A673 (cell line): ENCODE measurements at regions of chr10 and their contacts with region 1.

Region 1: DNA sequence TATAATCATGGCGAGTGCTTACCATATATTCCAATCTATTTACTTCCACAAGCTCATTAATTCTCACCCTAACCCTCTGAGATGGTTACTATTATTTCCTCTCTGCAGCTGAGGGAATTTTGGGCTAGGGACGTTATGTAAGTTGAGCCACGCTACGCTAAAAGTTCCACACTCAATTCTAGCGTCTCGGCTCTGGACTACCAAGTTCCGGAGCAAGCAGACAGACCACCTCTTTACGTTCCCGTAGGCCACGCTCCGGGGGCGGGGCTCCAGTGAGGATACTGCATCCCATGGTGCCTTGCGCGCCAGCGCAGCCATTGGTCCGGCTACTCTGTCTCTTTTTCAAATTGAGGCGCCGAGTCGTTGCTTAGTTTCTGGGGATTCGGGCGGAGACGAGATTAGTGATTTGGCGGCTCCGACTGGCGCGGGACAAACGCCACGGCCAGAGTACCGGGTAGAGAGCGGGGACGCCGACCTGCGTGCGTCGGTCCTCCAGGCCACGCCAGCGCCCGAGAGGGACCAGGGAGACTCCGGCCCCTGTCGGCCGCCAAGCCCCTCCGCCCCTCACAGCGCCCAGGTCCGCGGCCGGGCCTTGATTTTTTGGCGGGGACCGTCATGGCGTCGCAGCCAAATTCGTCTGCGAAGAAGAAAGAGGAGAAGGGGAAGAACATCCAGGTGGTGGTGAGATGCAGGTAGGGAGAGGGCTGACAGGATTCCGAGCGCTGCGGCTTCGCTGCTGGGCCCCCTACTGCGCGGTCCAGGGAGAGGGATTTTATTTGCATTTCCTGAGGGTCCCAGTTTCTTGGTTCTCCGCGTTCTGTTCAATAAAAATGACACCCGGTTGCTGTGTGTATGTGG is at the start of gene KIF11:
- DNase-seq: peak; percentile 99
- H3K4me3 ChIP-seq: peak within 1 kb of the TSS; percentile 81
- H3K27ac ChIP-seq: peak within 1 kb of the TSS; percentile 96
- H3K4me1 ChIP-seq: peaks cover 20% of the 10 kb centered on the region
- H3K27me3 ChIP-seq: no peaks in the 10 kb centered on the region
- CTCF ChIP-seq: no peak
- total RNA-seq, gene KIF11: 91.4 and 92.0 TPM in 2 replicates

Region 2: GRCh38 chr10:92604841-92605240 is 11.9 kb after region 1 on chr10:
- CTCF ChIA-PET with region 1: no interaction called
- POLR2A ChIA-PET with region 1: interaction called, 16 read pairs
- intact Hi-C with region 1: no loop called
- DNase-seq: no peak
- H3K4me3 ChIP-seq: no peak overlapping the region
- H3K27ac ChIP-seq: no peak overlapping the region
- H3K4me1 ChIP-seq: peaks cover 4% of the 10 kb centered on the region
- H3K27me3 ChIP-seq: no peaks in the 10 kb centered on the region
- CTCF ChIP-seq: no peak

Region 3: GRCh38 chr10:92848441-92849233 is 255.6 kb after region 1 on chr10 and contains the start of gene EXOC6:
- CTCF ChIA-PET with region 1: no interaction called
- POLR2A ChIA-PET with region 1: no interaction called
- intact Hi-C with region 1: loop called (anchors 10 kb)
- DNase-seq: peak; percentile 93
- H3K4me3 ChIP-seq: peak within 1 kb of the TSS; percentile 84
- H3K27ac ChIP-seq: peak within 1 kb of the TSS; percentile 93
- H3K4me1 ChIP-seq: peaks cover 8% of the 10 kb centered on the region
- H3K27me3 ChIP-seq: no peaks in the 10 kb centered on the region
- CTCF ChIP-seq: 0 out of 2 replicates have a peak, but pooled peaks have one; percentile 7
- total RNA-seq, gene EXOC6: 32.6 and 35.0 TPM in 2 replicates